HCT116 (cell line): ENCODE measurements at regions of chr7 and their contacts with region 1.

Region 1: GRCh38 chr7:64359543-64359942 is 45.8 kb downstream of the ZNF736 start:
- DNase-seq: no peak
- ATAC-seq: no peak
- H3K4me3 ChIP-seq: no peak overlapping the region
- H3K27ac ChIP-seq: no peak overlapping the region
- H3K4me1 ChIP-seq: no peaks in the 10 kb centered on the region
- H3K27me3 ChIP-seq: no peaks in the 10 kb centered on the region
- CTCF ChIP-seq: no peak
- POLR2A ChIP-seq: no peak
- RAD21 ChIP-seq: no peak

Region 2: DNA sequence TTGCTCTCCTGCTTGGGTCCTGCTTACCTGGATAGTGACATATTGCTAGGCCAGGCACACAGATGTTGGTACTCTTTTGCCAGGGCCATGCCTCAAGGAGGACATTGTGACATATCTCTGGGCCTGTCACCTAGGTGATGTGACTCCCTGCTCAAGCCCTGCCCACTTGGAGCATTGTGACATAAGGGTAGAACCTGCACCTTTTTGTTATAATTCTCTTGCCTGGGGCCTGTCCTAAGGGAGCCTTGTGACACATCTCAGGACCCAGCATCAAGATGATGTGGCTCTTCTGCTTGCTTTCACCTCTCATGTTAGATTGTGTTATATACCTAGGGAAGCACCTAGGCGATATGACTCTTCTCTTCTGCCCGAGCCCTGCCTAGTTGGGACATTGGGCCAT is 11.6 kb after region 1 on chr7:
- CTCF ChIA-PET with region 1: no interaction called
- POLR2A ChIA-PET with region 1: no interaction called
- RAD21 ChIA-PET with region 1: no interaction called
- intact Hi-C with region 1: no loop called
- DNase-seq: no peak
- ATAC-seq: no peak
- H3K4me3 ChIP-seq: no peak overlapping the region
- H3K27ac ChIP-seq: no peak overlapping the region
- H3K4me1 ChIP-seq: no peaks in the 10 kb centered on the region
- H3K27me3 ChIP-seq: no peaks in the 10 kb centered on the region
- CTCF ChIP-seq: no peak
- POLR2A ChIP-seq: no peak
- RAD21 ChIP-seq: no peak

Region 3: DNA sequence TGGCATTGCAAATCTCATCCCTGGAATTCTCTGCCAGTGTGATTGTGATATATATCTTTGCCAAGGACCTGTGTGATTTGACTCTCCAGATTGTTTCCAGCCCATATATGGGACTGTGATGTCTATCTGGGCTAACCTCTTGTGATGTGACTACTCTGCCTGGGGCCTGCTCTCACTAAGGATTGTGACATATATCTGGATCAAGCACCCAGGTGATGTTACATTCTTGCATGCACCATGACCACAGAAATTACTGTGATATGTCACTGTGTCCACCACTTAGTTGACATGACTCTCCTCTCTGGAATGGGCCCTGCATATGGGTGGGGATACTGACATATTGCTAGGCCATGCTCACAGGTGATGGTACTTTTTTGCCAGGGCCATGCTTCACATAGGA is 40.9 kb after region 1 on chr7:
- CTCF ChIA-PET with region 1: no interaction called
- POLR2A ChIA-PET with region 1: no interaction called
- RAD21 ChIA-PET with region 1: no interaction called
- intact Hi-C with region 1: loop called (anchors 5 kb)
- DNase-seq: no peak
- ATAC-seq: no peak
- H3K4me3 ChIP-seq: no peak overlapping the region
- H3K27ac ChIP-seq: no peak overlapping the region
- H3K4me1 ChIP-seq: no peaks in the 10 kb centered on the region
- H3K27me3 ChIP-seq: no peaks in the 10 kb centered on the region
- CTCF ChIP-seq: no peak
- POLR2A ChIP-seq: no peak
- RAD21 ChIP-seq: no peak